HEK293 (cell line): ENCODE measurements at regions of chrX and their contacts with region 1.

Region 1: GRCh38 chrX:10631416-10632145 is 11.2 kb upstream of the MID1 start:
- H3K4me3 ChIP-seq: no peak overlapping the region
- H3K27ac ChIP-seq: no peak overlapping the region
- H3K4me1 ChIP-seq: no peaks in the 10 kb centered on the region
- CTCF ChIP-seq: no peak

Region 2: GRCh38 chrX:10450229-10450958 is 181.2 kb before region 1 on chrX:
- CTCF ChIA-PET with region 1: no interaction called
- POLR2A ChIA-PET with region 1: no interaction called
- H3K4me3 ChIP-seq: no peak overlapping the region
- H3K27ac ChIP-seq: no peak overlapping the region
- H3K4me1 ChIP-seq: no peaks in the 10 kb centered on the region
- CTCF ChIP-seq: no peak

Region 3: DNA sequence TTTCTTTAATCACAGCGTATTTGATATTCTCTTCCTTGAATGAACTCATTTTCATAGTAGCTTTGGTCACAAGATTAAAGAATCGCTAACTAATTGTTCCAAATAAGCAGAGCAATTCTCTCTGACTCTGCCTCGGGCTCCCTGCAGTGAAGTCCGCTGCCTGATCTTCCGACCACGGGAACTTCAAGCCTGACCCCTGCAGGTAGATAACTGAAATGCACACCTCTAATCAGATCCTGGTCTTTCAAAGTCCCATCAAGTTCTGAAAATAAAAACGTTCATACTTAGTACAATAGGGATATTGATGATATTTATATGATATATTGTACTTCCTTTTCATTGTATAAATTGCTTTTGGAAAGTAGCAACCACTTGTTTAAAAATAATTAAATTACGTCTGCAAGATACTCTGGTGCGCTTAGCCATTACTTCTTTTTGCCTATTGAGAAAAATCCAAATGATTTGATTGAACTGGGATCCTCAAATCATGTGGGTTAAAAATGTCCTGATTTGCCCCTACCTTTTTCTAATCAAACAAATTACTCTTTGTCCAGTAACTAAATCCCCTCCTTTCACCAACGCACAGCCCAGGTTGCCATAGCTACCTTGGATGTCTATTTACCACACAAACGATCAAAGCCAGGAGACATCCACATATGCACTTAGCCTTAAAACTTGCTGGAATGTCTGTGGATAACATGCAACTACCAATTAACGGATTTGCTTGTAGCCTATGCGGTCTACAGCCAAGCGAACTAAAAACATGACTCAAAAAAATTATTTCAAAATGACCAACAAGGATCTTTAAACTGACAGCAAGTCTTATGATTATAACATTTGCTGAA is 15.4 kb before region 1 on chrX:
- CTCF ChIA-PET with region 1: interaction called, 4 read pairs
- POLR2A ChIA-PET with region 1: interaction called, 11 read pairs
- H3K4me3 ChIP-seq: no peak overlapping the region
- H3K27ac ChIP-seq: no peak overlapping the region
- H3K4me1 ChIP-seq: no peaks in the 10 kb centered on the region
- CTCF ChIP-seq: no peak